ENCODE measurements at regions of chr21 and their contacts with region 1.

Region 1: GRCh38 chr21:34510148-34511142 is 1.6 kb downstream of the KCNE1 start:
- DNase-seq: no peak
- H3K4me3 ChIP-seq: no peak overlapping the region
- H3K27me3 ChIP-seq: no peaks in the 10 kb centered on the region
- CTCF ChIP-seq: peak; percentile 87

Region 2: GRCh38 chr21:34340061-34340460 is 170.4 kb before region 1 on chr21:
- CTCF ChIA-PET with region 1: no interaction called
- POLR2A ChIA-PET with region 1: no interaction called
- DNase-seq: no peak
- H3K4me3 ChIP-seq: no peak overlapping the region
- H3K27me3 ChIP-seq: no peaks in the 10 kb centered on the region
- CTCF ChIP-seq: no peak

Region 3: GRCh38 chr21:34498623-34499022 is 11.8 kb before region 1 on chr21:
- CTCF ChIA-PET with region 1: interaction called, 26 read pairs
- POLR2A ChIA-PET with region 1: no interaction called
- DNase-seq: no peak
- H3K4me3 ChIP-seq: no peak overlapping the region
- H3K27me3 ChIP-seq: peaks cover 9% of the 10 kb centered on the region
- CTCF ChIP-seq: no peak

Region 4: DNA sequence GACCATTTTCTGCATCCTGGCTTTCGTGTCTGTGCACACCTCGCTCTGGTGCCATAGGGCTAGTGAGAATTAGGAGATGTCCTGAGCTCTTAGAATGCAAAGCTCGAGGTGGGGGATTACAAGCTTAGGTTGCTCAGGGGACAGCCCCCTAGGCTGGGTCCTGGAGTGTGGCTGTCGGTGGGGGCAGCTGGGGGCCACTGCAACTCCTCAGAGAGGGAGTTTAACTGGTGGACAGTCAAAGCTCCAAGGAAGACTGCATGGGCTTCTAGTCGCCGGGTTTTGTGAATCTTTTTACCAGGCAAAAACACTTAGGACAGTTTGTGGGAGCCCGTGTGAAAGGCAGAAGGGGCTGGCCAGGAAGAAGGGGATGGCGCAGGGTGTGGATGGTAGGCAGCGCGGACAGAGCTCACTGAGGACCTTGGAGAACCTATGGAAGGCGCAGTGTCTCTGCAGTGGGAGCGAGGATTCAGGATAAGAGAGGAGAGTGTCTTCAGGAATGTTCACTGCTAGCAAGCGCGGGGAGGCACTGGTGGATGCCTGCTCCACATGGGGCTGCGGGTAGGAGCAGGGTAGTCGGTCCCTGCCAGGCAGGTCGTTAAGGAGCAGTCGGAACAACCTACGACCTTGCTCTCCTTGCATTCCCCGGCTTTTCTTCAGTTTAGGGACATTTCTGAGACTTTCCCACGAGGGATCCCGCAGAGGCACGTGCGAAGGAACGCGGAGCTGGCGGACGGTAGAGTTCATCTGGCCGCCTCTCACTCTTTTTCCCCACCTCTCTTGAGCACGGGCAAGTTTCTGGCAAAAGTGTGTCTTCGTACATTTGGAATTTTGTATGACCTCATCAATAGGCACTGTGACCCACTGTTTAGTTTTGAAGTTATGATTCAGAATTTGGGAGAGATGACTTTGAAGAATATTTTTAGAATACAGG is 14.5 kb after region 1 on chr21:
- CTCF ChIA-PET with region 1: interaction called, 18 read pairs
- POLR2A ChIA-PET with region 1: no interaction called
- DNase-seq: no peak
- H3K4me3 ChIP-seq: peak overlapping the region; percentile 52
- H3K27me3 ChIP-seq: no peaks in the 10 kb centered on the region
- CTCF ChIP-seq: no peak

Region 5: GRCh38 chr21:34582506-34583150 is 72.2 kb after region 1 on chr21:
- CTCF ChIA-PET with region 1: interaction called, 74 read pairs
- POLR2A ChIA-PET with region 1: no interaction called
- DNase-seq: no peak
- H3K4me3 ChIP-seq: no peak overlapping the region
- H3K27me3 ChIP-seq: no peaks in the 10 kb centered on the region
- CTCF ChIP-seq: peak; percentile 61

Region 6: DNA sequence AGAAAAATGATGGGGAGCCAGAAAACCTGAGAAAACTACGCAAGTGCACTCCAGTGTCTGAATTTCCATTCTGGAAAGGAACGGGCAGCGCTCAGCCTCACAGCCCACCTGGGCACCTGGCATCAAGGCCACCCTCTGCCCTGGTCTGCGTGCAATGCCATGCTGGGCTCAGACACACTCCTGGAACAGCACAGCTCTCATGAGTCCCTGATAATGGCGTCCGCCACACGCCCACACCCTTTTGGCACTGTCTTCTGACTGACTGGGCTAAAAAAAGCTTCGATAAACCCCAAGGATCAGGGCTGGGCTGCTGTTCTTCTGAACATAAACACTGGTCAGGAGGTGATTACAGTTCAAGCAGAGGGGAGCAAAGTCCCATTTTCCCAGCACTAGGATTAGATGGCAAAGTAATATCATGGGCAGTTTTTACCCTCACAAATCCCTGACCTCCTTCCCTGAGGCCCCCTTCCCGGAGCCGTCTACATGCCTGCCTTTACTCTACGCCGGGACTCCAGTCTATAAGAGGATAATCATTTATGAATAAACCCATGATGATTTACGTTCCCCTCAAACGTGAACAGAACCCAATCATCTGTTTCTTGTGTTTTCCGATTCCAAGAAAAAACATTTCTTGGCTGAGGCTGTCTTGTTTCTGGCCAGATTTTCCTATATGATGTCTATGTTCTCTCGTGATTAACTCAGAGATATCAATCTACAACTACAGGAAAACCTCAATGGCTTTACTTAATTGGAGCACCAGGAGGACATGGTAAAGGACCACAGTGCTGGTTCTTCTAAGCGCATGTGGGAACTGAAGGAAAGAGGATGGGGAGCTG is 81.9 kb after region 1 on chr21:
- CTCF ChIA-PET with region 1: interaction called, 14 read pairs
- POLR2A ChIA-PET with region 1: no interaction called
- DNase-seq: no peak
- H3K4me3 ChIP-seq: no peak overlapping the region
- H3K27me3 ChIP-seq: no peaks in the 10 kb centered on the region
- CTCF ChIP-seq: no peak

Region 7: DNA sequence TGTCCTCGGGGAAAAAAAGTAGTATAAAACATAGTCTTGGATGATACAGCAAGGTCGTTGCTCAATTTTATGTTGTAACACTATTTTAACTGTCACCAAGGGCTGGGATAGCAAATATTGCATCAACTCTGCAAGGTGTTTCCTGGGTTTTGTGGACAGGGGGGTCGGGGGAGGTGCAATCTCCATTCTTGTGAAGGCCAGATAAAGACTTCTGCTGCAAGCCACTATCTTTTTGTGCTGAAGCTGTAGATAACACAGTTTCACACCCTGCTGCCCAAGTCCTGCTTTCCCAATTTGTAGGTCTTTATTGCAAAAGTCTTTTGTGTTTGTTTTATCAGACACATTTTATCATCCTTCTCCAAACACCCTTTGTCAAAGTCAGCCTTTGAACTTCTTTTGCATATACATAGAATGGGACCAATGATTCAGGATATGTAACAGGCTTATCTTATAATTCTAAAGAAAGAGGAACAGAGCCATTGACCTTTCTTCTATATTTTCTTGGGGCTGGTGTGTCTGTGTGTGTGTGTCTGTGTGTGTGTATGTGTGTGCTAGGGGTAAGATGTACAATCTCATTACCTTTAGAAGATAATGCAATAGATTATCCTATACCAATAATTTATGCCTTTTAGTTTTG is 398.1 kb after region 1 on chr21:
- CTCF ChIA-PET with region 1: no interaction called
- POLR2A ChIA-PET with region 1: no interaction called
- DNase-seq: no peak
- H3K4me3 ChIP-seq: no peak overlapping the region
- H3K27me3 ChIP-seq: no peaks in the 10 kb centered on the region
- CTCF ChIP-seq: no peak

Measured in BJ (cell line).